ENCODE measurements at regions of chr9 and their contacts with region 1.

Region 1: DNA sequence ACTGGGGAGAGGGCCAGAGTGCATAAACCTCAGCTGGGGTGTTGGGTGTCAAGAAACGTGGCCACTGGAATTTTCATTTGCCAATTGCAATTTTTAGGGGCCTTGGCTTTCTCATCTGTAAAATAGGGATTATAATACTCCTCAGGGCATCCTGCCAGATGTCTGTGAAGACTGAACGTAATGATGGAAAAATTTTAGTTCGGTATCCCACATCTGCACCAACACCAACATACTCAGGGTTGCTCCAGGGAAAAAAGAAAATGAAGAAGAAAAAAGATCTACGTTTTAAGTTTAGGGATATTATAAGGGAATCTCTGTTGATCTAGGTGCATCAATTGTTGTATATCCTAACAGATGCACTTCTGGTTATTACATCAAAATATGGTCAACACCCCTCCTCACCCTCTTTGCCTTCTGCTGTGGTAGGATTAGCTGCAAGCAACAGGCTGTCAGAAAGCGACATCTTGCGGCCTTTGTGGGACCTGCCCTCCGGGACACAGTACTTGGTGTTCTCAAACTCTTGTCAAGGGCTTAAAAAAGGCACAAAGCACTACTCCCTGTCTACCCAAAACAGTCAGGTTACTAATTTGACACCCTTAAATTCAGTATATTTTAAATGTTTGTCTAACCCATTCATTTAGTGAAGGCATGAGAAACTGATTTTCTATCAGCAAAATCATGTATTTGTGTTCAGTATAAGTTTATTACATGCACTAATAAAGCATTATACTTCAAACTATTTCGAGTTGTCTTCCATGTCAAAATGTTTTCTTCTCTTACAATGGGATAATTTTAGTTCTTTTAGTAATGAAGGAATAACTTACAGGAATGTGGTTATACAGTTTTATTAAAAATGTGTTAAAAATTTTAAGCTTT is 8.3 kb upstream of the TBC1D2 start:
- DNase-seq: peak; percentile 80 to 83 (median 82)
- ATAC-seq: peak; percentile 91
- H3K4me3 ChIP-seq: no peak overlapping the region
- H3K27ac ChIP-seq: no peak overlapping the region
- H3K4me1 ChIP-seq: no peaks in the 10 kb centered on the region
- H3K27me3 ChIP-seq: no peaks in the 10 kb centered on the region
- CTCF ChIP-seq: peak; percentile 79 to 93 (median 89)
- POLR2A ChIP-seq: no peak

Region 2: DNA sequence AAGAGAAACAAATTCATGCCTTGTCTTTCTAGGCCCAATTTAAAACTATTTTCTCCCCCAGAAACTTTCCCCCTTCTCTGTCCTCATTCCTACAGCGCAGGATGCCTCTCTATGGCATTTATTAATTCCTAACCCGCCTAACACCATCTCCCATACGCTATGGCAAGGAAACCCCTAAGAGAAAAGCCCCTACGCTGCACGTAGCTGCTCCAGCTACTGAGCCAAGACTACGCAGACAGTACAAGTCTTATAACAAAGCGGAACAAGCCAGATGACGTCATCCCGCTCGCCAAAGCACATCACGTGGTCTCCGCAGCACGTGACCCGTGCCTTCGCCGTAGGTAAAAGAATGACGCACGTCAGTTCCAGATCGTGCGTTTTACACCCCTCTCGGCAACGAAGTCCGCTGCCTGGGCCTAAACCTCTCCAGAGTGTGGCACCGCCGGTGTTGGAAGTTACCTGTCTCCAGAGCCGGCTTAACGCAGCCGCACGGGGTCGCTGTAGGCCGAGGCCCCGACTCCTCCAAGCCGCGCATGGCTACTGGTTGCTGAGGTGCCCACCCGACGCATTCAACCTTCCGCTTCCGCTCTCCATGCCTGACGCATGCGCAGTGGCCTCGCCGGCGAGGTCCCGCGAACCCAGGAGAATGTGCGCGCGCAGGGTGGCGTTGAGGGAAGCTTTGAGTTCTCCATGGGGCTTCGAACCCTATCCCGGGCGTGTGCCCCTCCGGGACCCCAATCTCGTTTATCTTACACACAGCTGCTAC is 341.6 kb before region 1 on chr9 and contains the start of gene TRMO:
- intact Hi-C with region 1: loop called (anchors 10 kb)
- DNase-seq: peak; percentile 98 to 99 (median 99)
- ATAC-seq: peak; percentile 96
- H3K4me3 ChIP-seq: peak within 1 kb of the TSS; percentile 12 to 32
- H3K27ac ChIP-seq: peak within 1 kb of the TSS; percentile 98 to 99 (median 99)
- H3K4me1 ChIP-seq: peaks cover 34% of the 10 kb centered on the region
- H3K27me3 ChIP-seq: peaks cover 0 to 4% of the 10 kb centered on the region in 2 donors
- CTCF ChIP-seq: peak; percentile 17 to 78 (median 66)
- POLR2A ChIP-seq: peak; percentile 81 to 97 (median 97)
- total RNA-seq, gene TRMO: 14.5 to 17.1 TPM

Region 3: DNA sequence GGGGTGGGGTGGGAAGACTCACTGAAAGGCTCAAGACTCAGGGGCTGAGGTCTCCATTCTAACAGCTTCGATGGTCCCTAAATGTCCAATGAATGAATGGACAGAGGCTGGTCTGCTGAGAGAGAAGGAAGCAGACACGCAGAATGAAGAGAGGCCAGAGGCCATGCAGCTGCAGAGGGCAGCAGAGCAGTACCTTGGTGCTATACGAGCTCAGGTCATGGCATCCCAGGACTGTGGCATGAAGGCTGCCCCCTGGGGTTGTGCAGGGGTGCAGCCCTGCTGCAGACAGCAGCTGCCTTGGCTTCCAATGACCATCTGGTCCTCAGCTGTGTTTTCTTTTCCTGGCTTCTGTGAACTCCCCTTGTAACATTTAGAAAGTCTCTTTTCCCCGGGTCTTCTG is 56.1 kb before region 1 on chr9:
- intact Hi-C with region 1: loop called (anchors 5 kb)
- DNase-seq: no peak
- ATAC-seq: no peak
- H3K4me3 ChIP-seq: no peak overlapping the region
- H3K27ac ChIP-seq: no peak overlapping the region
- H3K4me1 ChIP-seq: no peaks in the 10 kb centered on the region
- H3K27me3 ChIP-seq: no peaks in the 10 kb centered on the region
- CTCF ChIP-seq: no peak
- POLR2A ChIP-seq: no peak

Measured in body of pancreas (tissue), 4 donors.